MCF 10A (cell line): ENCODE measurements at regions of chr2 and their contacts with region 1.

Region 1: DNA sequence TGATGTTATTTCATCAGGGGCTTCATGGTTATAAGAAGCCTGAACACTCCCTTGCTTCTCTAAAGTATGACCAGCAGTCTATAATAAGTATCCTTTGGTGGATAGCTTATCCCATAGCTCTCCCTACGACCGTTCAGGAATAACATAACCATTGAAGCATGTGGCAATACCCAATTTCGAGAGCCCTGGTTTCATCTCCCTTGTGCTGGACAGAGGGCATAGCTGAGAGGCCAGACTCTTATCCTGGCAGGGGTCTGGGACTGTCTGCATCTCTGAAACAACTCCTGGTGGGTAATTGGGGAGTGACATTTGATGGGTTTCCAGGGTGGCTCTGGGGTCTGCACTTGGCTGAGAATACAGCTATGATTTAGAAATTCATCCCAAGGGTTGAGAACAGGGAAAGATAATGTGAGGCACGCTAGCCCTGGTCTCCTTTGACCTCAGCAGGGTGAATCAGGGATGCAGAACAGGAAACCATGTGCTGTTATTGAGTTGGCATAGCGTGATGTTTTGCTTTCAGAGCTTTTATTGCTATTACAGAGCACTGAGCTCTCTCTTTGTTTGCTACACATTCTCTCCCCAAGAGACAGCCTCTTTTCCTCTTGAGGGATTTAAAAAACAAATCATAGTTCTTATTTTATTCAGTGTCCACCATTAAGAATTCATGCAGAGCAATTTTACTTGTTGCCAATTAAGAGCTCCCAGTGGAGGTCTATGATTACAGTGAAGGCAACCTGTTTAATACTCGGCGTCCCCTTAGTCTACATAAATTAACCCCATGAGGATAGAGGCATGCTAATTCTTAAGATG is 274.5 kb downstream of the NCKAP5 start:
- DNase-seq: no peak
- H3K4me3 Mint-ChIP-seq: no peak overlapping the region
- H3K27ac Mint-ChIP-seq: no peak overlapping the region
- H3K4me1 Mint-ChIP-seq: no peaks in the 10 kb centered on the region
- H3K27me3 Mint-ChIP-seq: no peaks in the 10 kb centered on the region
- CTCF ChIP-seq: no peak

Region 2: GRCh38 chr2:133324147-133324561 is 30.4 kb after region 1 on chr2:
- CTCF ChIA-PET with region 1: no interaction called
- POLR2A ChIA-PET with region 1: no interaction called
- intact Hi-C with region 1: loop called (anchors 2 kb)
- DNase-seq: peak; percentile 4
- H3K4me3 Mint-ChIP-seq: no peak overlapping the region
- H3K27ac Mint-ChIP-seq: no peak overlapping the region
- H3K4me1 Mint-ChIP-seq: peaks cover 5% of the 10 kb centered on the region
- H3K27me3 Mint-ChIP-seq: no peaks in the 10 kb centered on the region
- CTCF ChIP-seq: no peak